Activated CD4-positive, alpha-beta T cell treated with anti-CD3 and anti-CD28 coated beads, Interleukin-2, amount 10 ng/mL, durations not matched to agents 7 days and 5 days (primary cell): ENCODE measurements at regions of chr20 and their contacts with region 1.

Region 1: DNA sequence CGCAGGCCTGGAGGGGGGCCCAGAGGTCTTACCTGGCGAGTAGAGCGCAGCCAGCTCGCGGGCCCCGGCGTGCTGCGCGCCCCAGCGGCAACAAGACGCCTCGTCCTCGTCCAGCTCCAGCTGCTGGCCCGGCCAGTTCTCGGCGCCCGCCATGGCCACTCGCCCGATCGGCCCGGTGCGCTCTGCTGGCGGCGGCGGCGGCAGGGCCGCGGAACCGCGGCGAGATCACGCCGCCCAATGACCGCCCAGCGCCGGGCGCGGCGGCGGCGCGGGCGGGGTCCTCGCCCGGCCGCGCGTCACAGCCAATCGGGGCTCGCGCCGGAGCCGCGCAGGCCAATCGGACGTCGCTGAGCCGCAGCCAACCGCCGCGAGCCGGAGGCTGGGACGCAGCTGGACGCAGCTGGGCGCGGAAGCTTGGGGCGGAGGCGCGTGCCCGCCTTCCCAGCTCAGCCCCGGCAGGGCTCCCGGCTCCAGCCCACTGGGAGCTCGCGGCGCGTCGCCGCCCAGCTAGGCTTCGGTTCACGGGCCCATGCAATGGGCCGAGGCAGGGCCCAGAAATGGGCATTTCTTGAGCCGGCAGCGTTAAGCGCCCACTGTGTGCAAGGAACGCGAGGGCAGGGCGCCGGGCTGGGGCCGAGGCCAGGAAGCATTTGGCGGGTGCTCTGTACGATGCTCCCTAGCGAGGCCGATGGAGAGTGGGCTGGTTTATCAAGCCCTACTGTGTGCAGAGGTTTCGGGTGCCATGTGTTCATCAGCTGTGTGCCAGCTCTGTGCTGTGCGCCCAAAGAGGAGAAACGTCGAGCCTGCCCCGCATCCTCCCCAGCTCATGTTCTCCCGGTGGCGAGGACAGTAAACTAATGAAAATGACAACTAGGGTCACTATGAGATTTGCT is at the start of gene PEDS1:
- DNase-seq: peak; percentile 85
- H3K4me3 Mint-ChIP-seq: peak within 1 kb of the TSS; percentile 90
- H3K27ac Mint-ChIP-seq: peak within 1 kb of the TSS; percentile 91
- H3K4me1 Mint-ChIP-seq: peaks cover 48% of the 10 kb centered on the region
- H3K27me3 Mint-ChIP-seq: no peaks in the 10 kb centered on the region
- total RNA-seq, gene PEDS1: 27.9 to 31.3 TPM

Region 2: DNA sequence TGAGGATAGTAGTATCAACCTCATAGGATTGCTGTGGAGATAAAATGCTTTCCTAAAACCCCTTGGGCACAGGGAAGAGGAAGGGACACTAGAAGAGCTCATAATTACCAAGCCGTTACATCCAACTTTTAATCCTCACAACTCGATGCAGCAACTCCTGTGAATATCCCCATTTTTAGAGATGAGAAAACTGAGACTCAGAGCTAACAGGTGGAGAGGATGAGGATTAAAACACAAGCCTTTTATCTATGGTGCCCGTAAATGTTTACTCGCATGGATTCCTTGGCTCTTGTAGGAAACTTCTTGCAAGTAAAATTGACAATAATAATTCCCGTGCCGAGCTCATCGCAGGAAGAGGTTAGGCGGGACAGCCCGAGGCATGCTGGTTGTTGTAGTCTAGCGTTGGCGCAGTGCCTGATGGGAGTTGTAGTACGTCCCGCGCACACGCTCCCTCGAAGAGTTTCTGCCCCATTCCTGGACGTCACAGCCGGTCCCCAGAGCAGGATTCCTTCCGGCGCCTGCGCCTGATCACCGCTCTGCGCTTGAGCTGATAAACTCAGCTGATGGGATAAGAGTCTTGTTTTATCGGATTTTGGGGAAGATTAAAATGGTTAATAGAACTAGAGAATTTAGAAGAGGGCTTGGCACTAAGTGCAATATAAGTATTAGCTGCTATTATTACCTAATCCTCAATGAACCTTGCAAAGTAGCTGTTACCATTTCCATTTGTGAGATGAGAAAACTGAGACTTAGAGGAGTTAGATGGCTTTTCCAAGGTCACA is 37.9 kb before region 1 on chr20:
- CTCF ChIA-PET with region 1: interaction called, 26 read pairs
- POLR2A ChIA-PET with region 1: interaction called, 3 read pairs
- DNase-seq: peak; percentile 93
- H3K4me3 Mint-ChIP-seq: peak overlapping the region; percentile 81
- H3K27ac Mint-ChIP-seq: peak overlapping the region; percentile 92
- H3K4me1 Mint-ChIP-seq: peaks cover 52% of the 10 kb centered on the region
- H3K27me3 Mint-ChIP-seq: no peaks in the 10 kb centered on the region

Region 3: DNA sequence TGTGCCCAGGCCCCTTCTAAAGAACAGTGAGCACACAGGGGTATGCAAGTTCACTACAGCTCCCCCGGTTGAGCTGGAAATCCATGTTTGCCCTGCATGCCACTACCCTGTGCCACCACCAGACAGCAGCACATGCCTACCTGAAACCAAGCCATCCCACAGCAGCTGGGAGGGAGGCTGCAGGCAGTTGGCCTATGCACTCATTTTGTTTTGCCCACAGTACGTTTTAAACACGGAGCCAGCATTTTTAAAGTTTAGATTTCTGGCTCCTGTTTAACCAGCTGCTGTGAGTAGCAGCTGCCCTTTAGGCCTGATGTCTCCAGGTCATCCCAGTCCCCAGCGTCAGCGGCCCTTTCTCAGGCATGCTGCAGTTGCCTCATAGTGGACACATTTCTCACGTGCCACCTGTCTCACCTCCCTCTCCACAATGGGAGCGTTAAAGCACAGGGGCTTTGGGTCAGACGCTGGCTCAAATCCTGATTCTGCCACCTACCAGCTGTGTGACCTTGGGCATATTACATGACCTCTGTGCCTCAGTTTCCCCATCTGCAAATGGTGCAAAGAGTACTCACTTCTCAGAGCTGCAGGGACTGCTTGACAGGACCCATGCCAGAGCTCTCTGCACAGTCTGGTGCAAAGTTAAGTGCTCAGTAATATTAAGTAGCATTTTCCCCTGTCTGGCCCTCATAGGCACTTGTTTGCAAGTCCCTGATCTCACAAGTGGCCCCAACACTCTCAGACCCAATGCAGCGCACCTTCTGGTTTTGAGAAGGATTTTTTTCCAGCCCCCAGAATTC is 32.6 kb before region 1 on chr20:
- CTCF ChIA-PET with region 1: interaction called, 26 read pairs
- POLR2A ChIA-PET with region 1: no interaction called
- DNase-seq: peak; percentile 71
- H3K4me3 Mint-ChIP-seq: no peak overlapping the region
- H3K27ac Mint-ChIP-seq: no peak overlapping the region
- H3K4me1 Mint-ChIP-seq: peaks cover 10% of the 10 kb centered on the region
- H3K27me3 Mint-ChIP-seq: no peaks in the 10 kb centered on the region

Region 4: DNA sequence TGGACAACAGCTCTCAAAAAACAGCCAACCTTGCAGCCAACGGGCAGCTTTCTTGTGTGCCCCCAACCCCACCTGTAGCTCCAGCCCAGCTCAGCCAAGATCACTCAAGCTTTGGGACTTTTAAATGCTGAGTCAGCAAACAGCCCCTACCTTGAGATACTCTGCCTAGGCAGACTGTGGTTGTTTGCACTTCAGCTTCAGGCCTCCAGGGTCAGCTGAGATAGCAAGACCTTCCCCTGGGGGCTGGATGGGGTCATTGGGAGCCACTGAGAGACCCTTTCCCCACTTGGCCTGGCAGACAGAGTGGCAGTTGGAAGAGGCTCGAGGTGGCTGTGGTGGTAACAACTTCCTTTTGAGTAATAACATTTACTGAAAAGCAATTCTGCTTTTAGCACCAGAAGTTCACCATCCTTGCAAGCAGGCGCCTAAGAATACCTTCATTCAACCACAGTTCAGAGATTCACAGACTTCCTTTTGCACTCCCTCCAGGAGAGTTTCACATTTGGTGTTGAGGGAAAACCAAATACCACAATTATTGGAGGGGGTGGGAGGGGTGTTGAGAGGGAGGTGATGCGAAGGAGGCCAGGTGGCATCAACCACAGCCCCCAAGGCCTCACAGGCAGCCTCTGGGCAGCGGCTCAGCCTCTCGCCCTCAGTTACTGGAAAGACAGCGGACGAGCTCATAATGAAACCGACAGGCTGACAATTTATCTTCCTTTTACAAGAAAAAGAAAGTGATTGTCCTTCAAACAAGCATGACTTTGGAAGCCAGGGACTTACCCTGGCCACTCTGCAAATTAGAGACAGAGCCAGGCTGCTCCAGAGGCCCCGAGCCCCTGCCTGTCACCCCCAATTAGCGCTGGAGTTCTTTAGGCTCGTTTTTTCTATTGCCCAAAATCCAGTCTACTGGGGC is 185.0 kb after region 1 on chr20:
- CTCF ChIA-PET with region 1: no interaction called
- POLR2A ChIA-PET with region 1: no interaction called
- DNase-seq: peak; percentile 69
- H3K4me3 Mint-ChIP-seq: peak overlapping the region; percentile 39
- H3K27ac Mint-ChIP-seq: peak overlapping the region; percentile 94
- H3K4me1 Mint-ChIP-seq: peaks cover 72% of the 10 kb centered on the region
- H3K27me3 Mint-ChIP-seq: peaks cover 3% of the 10 kb centered on the region